ENCODE measurements at regions of chr19 and their contacts with region 1.

Region 1: GRCh38 chr19:11587302-11587974 is 9.8 kb upstream of the ZNF627 start:
- DNase-seq: no peak
- ATAC-seq: peak; percentile 81
- H3K4me3 ChIP-seq: no peak overlapping the region
- H3K27ac ChIP-seq: no peak overlapping the region
- H3K4me1 ChIP-seq: peaks cover 26% of the 10 kb centered on the region
- H3K27me3 ChIP-seq: no peaks in the 10 kb centered on the region
- CTCF ChIP-seq: peak; percentile 90 to 98 (median 97)
- EP300 ChIP-seq: no peak
- POLR2A ChIP-seq: no peak
- RAD21 ChIP-seq: peak; percentile 96

Region 2: GRCh38 chr19:11035441-11036377 is 551.7 kb before region 1 on chr19:
- CTCF ChIA-PET with region 1: no interaction called
- POLR2A ChIA-PET with region 1: no interaction called
- RAD21 ChIA-PET with region 1: no interaction called
- SMC1A ChIA-PET with region 1: no interaction called
- in situ Hi-C with region 1: no loop called
- intact Hi-C with region 1: no loop called
- DNase-seq: peak; percentile 71
- ATAC-seq: peak; percentile 99
- H3K4me3 ChIP-seq: no peak overlapping the region
- H3K27ac ChIP-seq: no peak overlapping the region; the same call in 1 of the 2 replicates
- H3K4me1 ChIP-seq: peaks cover 4% of the 10 kb centered on the region; the same call in 1 of the 2 replicates
- H3K27me3 ChIP-seq: no peaks in the 10 kb centered on the region
- CTCF ChIP-seq: peak; percentile 93 to 99 (median 97); a peak in 5 of 6 replicates
- EP300 ChIP-seq: no peak
- POLR2A ChIP-seq: peak; percentile 44; the same call in 1 of the 2 replicates
- RAD21 ChIP-seq: peak; percentile 92

Region 3: DNA sequence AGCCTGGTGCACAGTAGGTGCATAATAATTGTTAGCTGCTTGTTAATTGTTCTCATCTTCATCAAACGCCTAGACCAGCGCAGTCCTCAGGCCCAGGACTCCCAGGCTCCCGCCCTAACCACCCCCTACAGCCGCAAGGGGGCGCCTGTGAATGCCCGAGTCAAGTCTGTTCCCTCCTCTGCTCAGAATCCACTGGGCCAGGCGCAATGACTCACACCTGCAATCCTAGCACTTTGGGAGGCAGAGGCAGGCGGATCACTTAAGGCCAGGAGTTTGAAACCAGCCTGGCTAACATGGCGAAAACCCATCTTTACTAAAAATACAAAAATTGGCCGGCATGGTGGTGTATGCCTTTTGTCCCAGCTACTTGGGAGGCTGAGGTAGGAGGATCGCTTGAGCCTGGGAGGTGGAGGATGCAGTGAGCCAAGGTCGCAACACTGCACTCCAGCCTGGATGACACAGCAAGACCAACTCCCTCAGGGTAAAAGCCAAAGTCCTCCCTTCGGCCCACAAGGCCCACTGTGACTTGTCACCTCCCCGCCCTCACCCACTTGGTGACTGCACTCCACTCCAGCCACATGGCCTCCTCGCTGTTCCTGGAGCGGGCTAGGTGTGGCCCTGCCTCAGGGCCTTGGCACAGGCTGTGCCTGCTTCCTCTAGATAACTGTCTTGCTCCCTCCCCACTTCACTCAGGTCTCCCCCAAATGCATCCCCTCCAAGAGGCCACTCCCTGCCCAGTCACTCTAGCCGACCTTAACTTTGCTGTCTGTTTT is 90.9 kb before region 1 on chr19:
- CTCF ChIA-PET with region 1: interaction called, 12 read pairs
- POLR2A ChIA-PET with region 1: no interaction called
- RAD21 ChIA-PET with region 1: no interaction called
- SMC1A ChIA-PET with region 1: interaction called, 7 read pairs
- in situ Hi-C with region 1: loop called (anchors 5 kb)
- intact Hi-C with region 1: loop called (anchors 1 kb)
- DNase-seq: no peak
- ATAC-seq: peak; percentile 97
- H3K4me3 ChIP-seq: no peak overlapping the region
- H3K27ac ChIP-seq: no peak overlapping the region
- H3K4me1 ChIP-seq: no peaks in the 10 kb centered on the region
- H3K27me3 ChIP-seq: no peaks in the 10 kb centered on the region
- CTCF ChIP-seq: peak; percentile 58 to 77 (median 73)
- EP300 ChIP-seq: no peak
- POLR2A ChIP-seq: no peak
- RAD21 ChIP-seq: peak; percentile 53

Region 4: DNA sequence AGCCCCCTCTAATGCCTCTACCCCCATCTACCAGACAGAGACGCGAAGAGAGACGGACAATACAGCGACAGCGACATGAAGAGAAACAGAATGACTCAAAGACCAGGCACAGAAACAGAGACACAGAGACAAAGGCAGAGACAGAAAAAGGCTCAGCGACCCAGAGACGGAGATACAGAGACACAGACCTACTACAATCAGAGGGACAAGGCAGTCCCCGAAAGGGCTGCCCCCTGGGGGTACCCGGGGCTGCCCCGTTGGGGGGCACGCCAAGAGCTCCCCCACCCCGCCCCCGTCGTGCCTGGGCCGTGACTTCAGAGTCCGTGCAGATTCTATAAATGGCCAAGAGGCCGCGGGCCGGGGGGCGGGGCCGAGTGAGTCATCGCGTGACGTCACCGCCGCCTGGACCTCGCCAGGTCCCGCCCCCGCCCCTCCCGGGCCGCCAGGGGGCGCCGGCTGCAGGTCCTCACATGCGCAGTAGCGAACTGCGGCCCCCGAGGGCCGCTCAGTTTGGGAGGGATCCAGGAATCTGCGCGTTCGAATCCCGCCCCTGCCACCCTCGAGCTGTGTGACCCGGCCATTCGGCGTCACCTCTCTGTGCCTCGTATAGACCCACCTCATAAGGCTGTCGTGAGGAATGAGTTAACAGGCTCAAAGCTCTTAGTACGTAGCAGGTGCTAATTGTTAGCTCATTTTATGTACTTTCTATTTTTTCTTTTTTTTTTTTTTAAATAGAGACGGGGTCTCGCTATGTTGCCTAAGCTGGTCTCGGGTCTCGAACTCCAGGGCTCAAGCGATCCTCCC is 51.4 kb before region 1 on chr19:
- CTCF ChIA-PET with region 1: interaction called, 9 read pairs
- POLR2A ChIA-PET with region 1: no interaction called
- RAD21 ChIA-PET with region 1: interaction called, 6 read pairs
- SMC1A ChIA-PET with region 1: interaction called, 7 read pairs
- in situ Hi-C with region 1: no loop called
- intact Hi-C with region 1: loop called (anchors 1 kb)
- DNase-seq: no peak
- ATAC-seq: peak; percentile 89
- H3K4me3 ChIP-seq: peak overlapping the region; percentile 57
- H3K27ac ChIP-seq: no peak overlapping the region
- H3K4me1 ChIP-seq: peaks cover 6% of the 10 kb centered on the region
- H3K27me3 ChIP-seq: no peaks in the 10 kb centered on the region
- CTCF ChIP-seq: peak; percentile 88 to 92 (median 90)
- EP300 ChIP-seq: no peak
- POLR2A ChIP-seq: no peak
- RAD21 ChIP-seq: peak; percentile 36; the same call in 1 of the 2 replicates

Region 5: GRCh38 chr19:11570039-11570462 is 17.4 kb before region 1 on chr19:
- CTCF ChIA-PET with region 1: interaction called, 47 read pairs
- POLR2A ChIA-PET with region 1: interaction called, 87 read pairs
- RAD21 ChIA-PET with region 1: interaction called, 66 read pairs
- SMC1A ChIA-PET with region 1: interaction called, 84 read pairs
- in situ Hi-C with region 1: no loop called
- intact Hi-C with region 1: no loop called
- DNase-seq: no peak
- ATAC-seq: no peak
- H3K4me3 ChIP-seq: no peak overlapping the region
- H3K27ac ChIP-seq: peak overlapping the region; percentile 42
- H3K4me1 ChIP-seq: peaks cover 33% of the 10 kb centered on the region
- H3K27me3 ChIP-seq: no peaks in the 10 kb centered on the region
- CTCF ChIP-seq: no peak
- EP300 ChIP-seq: peak in 1 of 2 experiments; percentile 45; a peak in 1 of 4 replicates
- POLR2A ChIP-seq: no peak
- RAD21 ChIP-seq: no peak

Region 6: GRCh38 chr19:11673608-11674041 is 86.2 kb after region 1 on chr19:
- CTCF ChIA-PET with region 1: no interaction called
- POLR2A ChIA-PET with region 1: no interaction called
- RAD21 ChIA-PET with region 1: no interaction called
- SMC1A ChIA-PET with region 1: no interaction called
- in situ Hi-C with region 1: no loop called
- intact Hi-C with region 1: no loop called
- DNase-seq: no peak
- ATAC-seq: no peak
- H3K4me3 ChIP-seq: no peak overlapping the region
- H3K27ac ChIP-seq: no peak overlapping the region
- H3K4me1 ChIP-seq: no peaks in the 10 kb centered on the region
- H3K27me3 ChIP-seq: no peaks in the 10 kb centered on the region
- CTCF ChIP-seq: peak; percentile 24 to 39 (median 34); a peak in 4 of 6 replicates
- EP300 ChIP-seq: no peak
- POLR2A ChIP-seq: no peak
- RAD21 ChIP-seq: no peak

Region 7: GRCh38 chr19:11832253-11832912 is 244.9 kb after region 1 on chr19:
- CTCF ChIA-PET with region 1: no interaction called
- POLR2A ChIA-PET with region 1: no interaction called
- RAD21 ChIA-PET with region 1: no interaction called
- SMC1A ChIA-PET with region 1: no interaction called
- in situ Hi-C with region 1: no loop called
- intact Hi-C with region 1: no loop called
- DNase-seq: no peak
- ATAC-seq: no peak
- H3K4me3 ChIP-seq: no peak overlapping the region
- H3K27ac ChIP-seq: no peak overlapping the region
- H3K4me1 ChIP-seq: no peaks in the 10 kb centered on the region
- H3K27me3 ChIP-seq: no peaks in the 10 kb centered on the region
- CTCF ChIP-seq: no peak
- EP300 ChIP-seq: no peak
- POLR2A ChIP-seq: no peak
- RAD21 ChIP-seq: no peak

Measured in GM12878 (cell line).